ENCODE measurements at regions of chr9 and their contacts with region 1.

Region 1: DNA sequence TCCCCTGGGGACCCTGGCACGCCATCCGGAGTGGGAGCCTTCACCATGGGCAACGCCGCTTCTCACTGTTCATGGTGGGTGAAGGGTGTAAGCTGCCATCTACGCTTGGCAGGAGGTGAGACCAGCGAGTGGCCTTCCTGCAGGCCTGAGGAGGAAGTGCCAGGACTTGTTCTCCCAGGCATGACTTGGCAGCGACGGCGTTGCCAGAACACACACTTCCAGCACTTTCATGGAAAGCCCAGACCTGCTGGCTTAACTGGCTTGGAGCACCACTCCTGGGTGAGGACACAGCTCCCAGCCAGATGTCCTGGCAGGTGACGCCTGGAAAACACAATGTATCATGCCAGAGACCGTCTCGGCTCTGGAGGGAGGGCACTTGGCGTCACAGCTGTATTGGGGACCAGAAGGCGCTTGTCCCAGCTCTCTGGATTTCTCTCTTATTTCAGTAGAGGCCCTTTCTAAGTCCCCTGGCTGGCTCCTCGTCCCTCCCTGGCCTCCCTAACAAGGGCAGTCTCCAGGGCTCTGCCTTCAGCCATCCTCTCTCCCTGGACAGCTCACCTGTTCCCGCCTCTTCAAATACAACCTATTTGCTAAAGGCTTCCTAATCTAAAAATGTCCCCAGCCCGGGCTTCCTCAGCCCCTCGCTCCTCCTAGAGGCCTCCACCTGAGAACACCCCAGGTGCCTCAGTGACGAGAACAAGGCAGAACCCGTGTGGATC is 188.3 kb downstream of the OLFM1 start:
- DNase-seq: no peak
- H3K4me3 ChIP-seq: no peak overlapping the region
- CTCF ChIP-seq: no peak
- POLR2A ChIP-seq: no peak

Region 2: GRCh38 chr9:133375724-133376654 is 1899.7 kb before region 1 on chr9 and contains the starts of genes STKLD1 and SURF4:
- intact Hi-C with region 1: no loop called
- DNase-seq: peak; percentile 93 to 99
- H3K4me3 ChIP-seq: peak within 1 kb of the TSS; percentile 99
- CTCF ChIP-seq: no peak
- POLR2A ChIP-seq: peak in 1 of 2 donors; percentile 38
- total RNA-seq, gene STKLD1: 0.54 to 7.0 (median 3.7) TPM in 3 of 4 donors, not detected in the other
- total RNA-seq, gene SURF4: 84.2 to 114 (median 100) TPM

Region 3: DNA sequence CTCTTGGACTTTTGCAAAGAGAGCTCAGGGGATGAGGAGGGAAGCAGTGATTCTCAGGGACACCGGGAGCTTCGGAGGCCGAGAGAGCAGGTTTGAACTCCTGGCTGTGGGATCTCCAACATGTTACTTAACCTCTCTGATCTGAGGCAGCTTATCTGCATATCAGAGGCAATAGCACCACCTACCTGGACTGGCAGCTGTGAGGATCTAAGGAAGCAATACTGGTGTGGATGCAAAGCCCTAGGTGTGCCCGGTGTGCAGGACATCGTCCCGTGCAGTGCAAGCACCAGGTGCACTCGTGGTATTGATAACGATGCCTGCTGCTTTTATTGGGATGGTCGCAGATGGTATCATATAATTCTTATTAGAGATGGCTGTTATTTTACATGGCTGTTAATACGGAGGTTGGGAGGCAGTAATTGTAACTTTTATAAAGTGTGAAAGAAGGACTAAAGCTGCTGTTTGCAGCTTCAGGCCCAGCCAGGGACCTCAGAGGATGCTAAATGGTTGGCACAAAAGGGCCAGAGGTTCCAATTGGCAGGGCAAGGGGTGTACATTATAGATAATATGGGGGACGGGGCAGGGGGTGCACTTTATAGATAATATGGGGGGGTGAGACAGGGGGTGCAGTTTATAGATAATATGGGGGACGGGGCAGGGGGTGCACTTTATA is 619.3 kb before region 1 on chr9:
- intact Hi-C with region 1: no loop called
- DNase-seq: no peak
- H3K4me3 ChIP-seq: no peak overlapping the region
- CTCF ChIP-seq: no peak
- POLR2A ChIP-seq: no peak

Region 4: DNA sequence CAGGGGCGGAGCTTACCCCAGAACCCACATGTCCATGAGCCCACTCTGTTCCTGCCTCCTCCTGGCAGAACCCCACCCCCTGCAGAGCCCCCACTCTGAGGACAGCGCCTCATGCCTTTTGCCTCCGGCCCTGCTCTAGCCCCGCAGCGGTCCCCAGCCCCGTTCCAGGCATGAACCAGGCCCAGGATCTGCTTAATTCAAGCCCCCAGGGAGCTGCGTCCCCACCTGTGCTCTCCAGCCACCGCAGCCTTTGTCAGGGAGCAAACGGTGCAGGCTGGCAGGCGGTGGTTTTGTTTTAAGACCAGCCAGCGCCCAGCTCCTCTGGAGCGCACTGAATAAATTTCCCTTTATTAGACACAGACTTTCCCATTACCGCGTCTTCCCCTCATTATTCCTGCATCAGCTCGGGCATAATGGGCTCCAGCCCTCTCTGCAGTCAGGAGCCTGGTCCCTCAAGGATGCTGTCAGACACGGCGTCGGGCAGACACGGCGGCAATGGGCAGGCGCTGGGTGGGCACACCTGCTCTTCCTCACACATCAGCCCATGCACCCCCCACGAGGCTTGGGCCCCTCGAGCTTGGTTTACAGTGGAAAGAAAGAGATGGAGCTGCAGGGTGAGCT is 50.7 kb before region 1 on chr9:
- intact Hi-C with region 1: loop called (anchors 5 kb)
- DNase-seq: no peak
- H3K4me3 ChIP-seq: no peak overlapping the region
- CTCF ChIP-seq: no peak
- POLR2A ChIP-seq: no peak

Measured in lower leg skin (tissue), 4 donors.